GM12878 (cell line): ENCODE measurements at regions of chrX and their contacts with region 1.

Region 1: GRCh38 chrX:96684339-96685209 is at the start of gene DIAPH2:
- DNase-seq: peak; percentile 34
- ATAC-seq: peak; percentile 92
- H3K4me3 ChIP-seq: peak within 1 kb of the TSS; percentile 68
- H3K27ac ChIP-seq: peak within 1 kb of the TSS; percentile 72
- H3K4me1 ChIP-seq: no peaks in the 10 kb centered on the region
- H3K27me3 ChIP-seq: no peaks in the 10 kb centered on the region
- CTCF ChIP-seq: peak in 2 of 3 experiments; percentile 8 to 10; a peak in 1 of 6 replicates
- EP300 ChIP-seq: no peak
- POLR2A ChIP-seq: peak; percentile 61
- RAD21 ChIP-seq: no peak
- polyA plus RNA-seq, gene DIAPH2: 2.2 to 2.5 TPM

Region 2: DNA sequence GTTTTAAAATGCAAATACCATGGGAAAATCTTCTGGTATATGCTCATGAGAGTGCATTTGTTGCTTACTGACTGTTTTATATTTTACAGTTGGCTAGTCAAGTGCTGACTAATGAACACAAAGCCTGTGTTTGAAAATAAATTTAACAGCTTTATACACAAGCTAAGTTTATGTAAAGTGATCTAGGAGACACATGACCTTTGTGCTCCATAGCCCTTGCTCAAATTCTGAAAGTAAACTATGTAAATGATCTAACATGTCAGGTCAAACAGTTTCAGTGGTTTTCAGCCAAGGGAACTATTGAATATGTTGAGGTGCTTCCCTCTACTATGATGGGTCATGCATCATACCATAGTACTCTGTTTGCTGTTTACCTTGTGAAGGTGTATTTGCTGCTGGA is 36.8 kb after region 1 on chrX:
- CTCF ChIA-PET with region 1: no interaction called
- POLR2A ChIA-PET with region 1: interaction called, 3 read pairs
- RAD21 ChIA-PET with region 1: interaction called, 6 read pairs
- SMC1A ChIA-PET with region 1: interaction called, 7 read pairs
- in situ Hi-C with region 1: no loop called
- intact Hi-C with region 1: loop called (anchors 1 kb)
- DNase-seq: peak; percentile 50
- ATAC-seq: peak; percentile 100
- H3K4me3 ChIP-seq: no peak overlapping the region
- H3K27ac ChIP-seq: no peak overlapping the region
- H3K4me1 ChIP-seq: no peaks in the 10 kb centered on the region
- H3K27me3 ChIP-seq: no peaks in the 10 kb centered on the region
- CTCF ChIP-seq: no peak
- EP300 ChIP-seq: no peak
- POLR2A ChIP-seq: no peak
- RAD21 ChIP-seq: no peak